ENCODE measurements at regions of chr7 and their contacts with region 1.

Region 1: DNA sequence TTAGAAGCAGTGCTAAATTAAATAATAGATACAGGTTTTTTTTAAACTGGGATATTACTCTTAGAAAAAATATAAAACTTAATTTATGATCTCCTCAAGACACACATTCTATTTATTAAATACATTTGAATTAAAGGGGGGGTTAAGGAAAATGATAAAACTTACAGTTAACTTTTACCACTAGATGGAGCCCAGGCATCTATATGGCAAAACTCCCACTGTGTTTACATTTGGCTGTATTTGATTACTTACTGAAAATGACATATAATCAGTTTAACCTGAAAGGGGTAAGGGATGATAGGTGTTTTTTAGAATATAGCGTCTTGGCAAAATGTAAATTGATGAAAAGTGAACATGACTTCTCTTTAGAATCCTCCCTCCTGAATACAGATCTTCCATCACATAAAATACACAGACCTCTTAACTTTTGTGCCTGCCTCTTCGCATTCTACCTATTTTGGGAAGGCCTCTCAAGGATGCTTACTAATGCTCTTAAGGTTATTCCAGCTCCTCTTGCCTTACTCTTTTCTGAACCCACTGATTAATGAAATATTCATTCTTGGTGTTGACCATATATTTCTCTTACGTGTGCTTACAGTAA is 235.7 kb downstream of the AGMO start:
- DNase-seq: no peak
- ATAC-seq: no peak

Region 2: DNA sequence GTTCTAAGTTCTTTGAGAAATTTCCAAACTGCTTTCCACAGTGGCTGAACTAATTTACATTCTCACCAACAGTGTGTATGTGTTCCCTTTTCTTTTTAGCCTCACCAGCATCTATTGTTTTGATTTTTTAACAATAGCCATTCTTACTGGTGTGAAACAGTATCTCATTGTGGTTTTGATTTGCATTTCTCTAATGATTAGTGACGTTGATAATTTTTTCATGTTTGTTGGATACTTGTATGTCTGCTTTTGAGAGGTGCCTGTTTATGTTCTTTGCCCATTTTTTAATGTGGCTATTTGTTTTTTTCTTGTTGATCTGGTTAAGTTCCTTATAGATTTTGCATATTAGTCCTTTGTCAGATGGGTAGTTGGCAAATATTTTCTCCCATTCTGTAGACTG is 44.3 kb after region 1 on chr7:
- intact Hi-C with region 1: no loop called
- DNase-seq: no peak
- ATAC-seq: no peak

Region 3: DNA sequence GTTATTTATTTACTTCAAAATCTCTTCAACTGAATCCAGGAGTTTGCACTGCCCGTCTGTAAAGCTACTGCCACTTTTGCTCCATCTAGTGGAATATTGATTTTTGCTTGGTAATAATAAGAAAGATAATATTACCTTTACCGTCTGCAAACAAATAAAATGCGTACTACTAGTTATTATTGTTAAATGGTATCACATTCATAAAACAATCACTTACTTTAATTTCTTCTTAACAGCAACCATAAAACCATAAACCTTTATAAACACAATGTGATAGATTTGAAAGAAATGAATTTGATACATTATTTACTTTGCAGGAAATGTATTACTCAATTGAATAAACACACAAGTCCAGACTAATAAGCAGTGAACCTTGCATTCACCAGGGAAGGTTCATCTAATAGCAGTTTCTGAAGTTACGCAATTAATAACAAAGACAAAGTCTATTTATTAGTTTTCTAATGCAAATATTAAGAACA is 229.3 kb after region 1 on chr7:
- intact Hi-C with region 1: loop called (anchors 10 kb)
- DNase-seq: no peak
- ATAC-seq: no peak

Region 4: DNA sequence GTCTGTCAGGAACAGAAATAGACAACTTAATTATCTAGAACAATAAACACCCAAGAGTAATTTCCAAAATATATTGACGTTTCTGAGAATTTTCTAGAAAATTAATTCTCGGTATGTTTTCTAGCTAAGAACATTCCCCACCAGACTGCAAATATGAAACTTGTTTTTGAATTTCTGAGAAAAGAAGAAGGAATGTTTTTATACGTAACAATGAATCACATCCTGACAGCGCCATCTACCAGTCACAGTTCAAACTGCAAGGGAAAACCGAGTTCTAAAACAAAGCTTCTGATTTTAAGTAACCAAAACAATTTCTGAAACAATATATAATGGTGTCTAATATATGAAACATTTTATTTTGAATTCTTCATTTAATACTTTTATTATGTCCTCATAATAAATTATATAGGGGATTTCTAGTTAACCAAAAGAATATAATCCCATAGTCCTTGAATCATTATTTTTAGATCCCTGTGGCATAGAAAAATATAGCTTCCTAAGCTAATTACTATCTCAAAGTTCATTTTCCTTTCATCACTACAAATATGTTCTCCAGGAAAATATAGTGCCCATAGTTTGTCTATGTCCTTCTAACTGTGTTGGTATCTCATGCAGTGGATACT is 394.8 kb after region 1 on chr7:
- intact Hi-C with region 1: loop called (anchors 5 kb)
- DNase-seq: no peak
- ATAC-seq: no peak

Region 5: DNA sequence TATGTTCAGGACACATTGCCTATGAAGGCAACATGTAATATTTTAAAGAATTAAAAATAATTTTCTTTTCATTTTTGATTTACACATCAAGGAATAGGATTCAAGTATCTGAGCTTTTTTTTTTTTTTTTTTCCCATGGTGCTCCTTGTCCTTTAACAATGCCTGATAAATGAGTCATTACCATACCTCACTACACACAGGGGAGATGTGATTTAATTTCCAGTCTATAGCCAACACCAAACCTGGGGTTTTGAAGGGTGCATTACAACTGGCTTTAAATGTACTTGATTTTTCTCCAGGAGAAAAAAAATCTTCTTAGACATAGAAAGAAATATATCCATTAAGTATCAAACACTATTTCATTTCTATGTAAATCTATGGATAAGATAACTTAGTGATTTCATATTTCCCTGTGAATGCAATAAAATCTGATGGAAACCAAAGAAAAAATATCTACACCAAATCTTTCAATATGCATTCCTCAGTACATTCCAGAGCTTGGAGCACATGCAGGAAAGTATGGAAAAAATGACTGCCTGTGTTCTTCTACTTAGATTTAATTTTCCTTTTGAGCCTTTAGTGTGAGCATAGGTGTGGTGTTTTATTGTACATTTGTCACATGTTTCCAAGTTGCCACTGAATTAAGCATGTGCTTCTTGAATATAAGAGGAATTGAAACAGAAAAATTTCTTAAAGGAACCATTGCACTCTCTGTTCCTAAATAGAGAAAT is 565.2 kb after region 1 on chr7:
- intact Hi-C with region 1: loop called (anchors 10 kb)
- DNase-seq: no peak
- ATAC-seq: no peak

Measured in Right ventricle myocardium inferior (tissue), 1 donor.